Testis (tissue), 5 donors: ENCODE measurements at regions of chr2 and their contacts with region 1.

Region 1: DNA sequence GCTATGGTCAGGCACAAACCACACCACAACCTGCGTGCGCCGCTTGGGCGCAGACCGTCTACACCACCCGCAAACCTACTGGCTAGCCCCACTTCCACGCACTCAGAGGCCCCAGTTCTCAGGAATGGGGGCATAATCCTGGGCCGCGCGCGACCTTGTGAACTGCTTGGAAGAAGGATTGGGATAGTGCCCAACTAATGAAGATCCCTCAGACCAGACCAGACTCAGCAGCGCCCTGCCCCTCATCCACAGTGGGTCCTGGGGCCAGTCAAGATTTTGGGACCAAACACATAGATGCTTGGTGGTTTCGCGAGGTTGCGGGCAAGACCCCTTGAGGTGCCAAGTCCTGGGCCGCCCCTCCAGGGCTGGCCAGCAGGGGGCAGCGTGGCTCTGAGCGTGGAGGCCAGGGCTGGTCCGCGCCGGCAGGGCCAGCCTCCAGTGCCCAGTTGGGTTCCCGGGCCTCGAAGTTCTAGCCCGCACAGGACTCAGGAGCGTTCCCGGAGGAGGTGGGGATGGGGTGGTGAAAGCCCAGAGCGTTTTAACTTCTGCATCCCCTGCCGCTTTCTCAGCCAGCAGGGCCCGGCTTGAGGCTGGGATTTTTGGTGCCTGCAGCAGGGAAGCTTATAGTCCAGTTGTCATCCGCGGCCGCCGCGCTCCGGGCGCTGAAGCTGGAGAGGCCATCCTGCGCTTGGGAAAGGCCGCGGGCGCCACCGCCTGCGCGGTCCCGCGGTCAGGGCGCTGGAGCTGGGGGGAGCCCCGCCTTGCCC is 8.3 kb downstream of the OSR1 start:
- DNase-seq: peak; percentile 74
- H3K4me3 ChIP-seq: peak overlapping the region; percentile 37 to 40
- H3K27ac ChIP-seq: no peak overlapping the region
- H3K4me1 ChIP-seq: peaks cover 23% of the 10 kb centered on the region
- H3K27me3 ChIP-seq: no peaks in the 10 kb centered on the region
- CTCF ChIP-seq: peak; percentile 49 to 76 (median 73)
- POLR2A ChIP-seq: no peak

Region 2: DNA sequence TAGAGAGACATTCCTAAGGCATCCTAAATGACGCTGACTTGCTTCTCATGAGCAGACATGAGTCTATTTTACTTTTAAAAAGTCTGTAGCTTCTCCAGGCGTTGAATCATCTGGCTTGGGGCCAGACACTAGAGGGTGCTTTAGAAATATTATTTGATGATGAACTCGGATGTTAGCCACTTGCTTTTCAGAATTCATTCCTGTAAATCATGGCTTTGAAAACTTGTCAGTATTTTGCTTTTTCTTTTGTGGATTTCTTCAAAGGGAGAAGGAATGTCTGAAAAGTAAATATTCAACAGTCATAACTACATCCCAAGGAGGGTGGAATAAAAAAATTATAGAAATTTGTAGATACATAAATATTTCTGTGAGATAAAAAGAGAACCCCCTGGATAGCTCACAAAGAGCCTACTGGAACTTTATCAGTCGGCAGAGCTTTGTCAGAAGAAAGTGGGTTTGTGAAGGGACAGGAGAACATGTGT is 362.5 kb before region 1 on chr2:
- intact Hi-C with region 1: loop called (anchors 10 kb)
- DNase-seq: peak; percentile 91
- H3K4me3 ChIP-seq: no peak overlapping the region
- H3K27ac ChIP-seq: no peak overlapping the region
- H3K4me1 ChIP-seq: peaks cover 26% of the 10 kb centered on the region
- H3K27me3 ChIP-seq: no peaks in the 10 kb centered on the region
- CTCF ChIP-seq: peak in 1 of 3 experiments; percentile 22
- POLR2A ChIP-seq: no peak

Region 3: GRCh38 chr2:19408592-19408991 is 58.5 kb after region 1 on chr2:
- intact Hi-C with region 1: no loop called
- DNase-seq: no peak
- H3K4me3 ChIP-seq: no peak overlapping the region
- H3K27ac ChIP-seq: no peak overlapping the region
- H3K4me1 ChIP-seq: no peaks in the 10 kb centered on the region
- H3K27me3 ChIP-seq: no peaks in the 10 kb centered on the region
- CTCF ChIP-seq: no peak
- POLR2A ChIP-seq: no peak

Region 4: DNA sequence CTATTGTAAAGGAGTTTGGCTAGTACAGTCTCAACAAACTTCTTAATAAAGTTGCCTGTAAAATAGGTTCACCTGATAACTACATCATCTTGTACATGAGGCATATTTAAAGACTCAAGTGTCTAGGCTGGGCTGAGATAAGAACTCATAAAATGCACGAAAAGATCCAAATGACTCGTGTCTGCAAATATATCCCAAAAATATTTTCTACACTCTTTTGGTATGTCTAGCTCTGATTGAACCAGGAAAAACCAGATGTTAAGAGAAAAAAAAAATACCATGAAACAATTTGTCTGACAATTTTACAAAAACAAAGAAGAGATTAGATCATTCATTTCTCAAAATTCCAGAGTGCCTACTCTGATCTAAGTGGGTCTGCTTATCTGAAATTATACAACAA is 175.2 kb after region 1 on chr2:
- intact Hi-C with region 1: no loop called
- DNase-seq: no peak
- H3K4me3 ChIP-seq: no peak overlapping the region
- H3K27ac ChIP-seq: no peak overlapping the region
- H3K4me1 ChIP-seq: no peaks in the 10 kb centered on the region
- H3K27me3 ChIP-seq: no peaks in the 10 kb centered on the region
- CTCF ChIP-seq: no peak
- POLR2A ChIP-seq: no peak